IMR-90 (cell line): ENCODE measurements at regions of chr21 and their contacts with region 1.

Region 1: DNA sequence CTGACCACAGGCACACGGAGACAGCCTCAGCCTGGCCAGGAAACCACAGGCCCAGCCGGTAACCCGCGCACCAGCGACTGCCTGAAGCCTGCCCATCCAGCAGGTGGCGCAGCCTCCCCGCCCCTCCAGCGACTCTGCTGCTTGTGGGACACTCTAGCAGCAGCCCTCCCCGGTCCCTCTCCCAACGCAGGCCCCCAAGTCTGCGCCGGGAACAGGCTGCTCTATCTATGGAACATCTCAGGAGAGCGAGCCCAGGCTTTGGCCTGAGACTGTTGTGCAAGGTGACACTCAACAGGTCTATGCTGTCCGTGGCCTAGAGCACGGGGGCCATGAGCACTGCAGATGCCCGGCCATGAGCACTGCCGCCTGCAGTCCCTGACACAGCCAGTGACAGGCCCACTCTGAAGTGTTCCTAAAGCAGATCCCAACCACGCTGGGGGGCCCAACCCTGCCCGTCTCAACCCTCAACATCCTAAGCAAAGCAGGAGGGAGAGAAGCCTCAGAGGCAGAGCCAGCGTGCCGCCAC is 28.4 kb downstream of the WDR4 start:
- DNase-seq: no peak
- ATAC-seq: peak; percentile 54; the same call in 1 of the 2 replicates
- H3K4me3 ChIP-seq: no peak overlapping the region
- H3K27ac ChIP-seq: no peak overlapping the region
- H3K4me1 ChIP-seq: no peaks in the 10 kb centered on the region
- H3K27me3 ChIP-seq: no peaks in the 10 kb centered on the region
- CTCF ChIP-seq: peak; percentile 20; the same call in 1 of the 2 replicates
- POLR2A ChIP-seq: no peak
- RAD21 ChIP-seq: peak; percentile 19; the same call in 1 of the 2 replicates

Region 2: DNA sequence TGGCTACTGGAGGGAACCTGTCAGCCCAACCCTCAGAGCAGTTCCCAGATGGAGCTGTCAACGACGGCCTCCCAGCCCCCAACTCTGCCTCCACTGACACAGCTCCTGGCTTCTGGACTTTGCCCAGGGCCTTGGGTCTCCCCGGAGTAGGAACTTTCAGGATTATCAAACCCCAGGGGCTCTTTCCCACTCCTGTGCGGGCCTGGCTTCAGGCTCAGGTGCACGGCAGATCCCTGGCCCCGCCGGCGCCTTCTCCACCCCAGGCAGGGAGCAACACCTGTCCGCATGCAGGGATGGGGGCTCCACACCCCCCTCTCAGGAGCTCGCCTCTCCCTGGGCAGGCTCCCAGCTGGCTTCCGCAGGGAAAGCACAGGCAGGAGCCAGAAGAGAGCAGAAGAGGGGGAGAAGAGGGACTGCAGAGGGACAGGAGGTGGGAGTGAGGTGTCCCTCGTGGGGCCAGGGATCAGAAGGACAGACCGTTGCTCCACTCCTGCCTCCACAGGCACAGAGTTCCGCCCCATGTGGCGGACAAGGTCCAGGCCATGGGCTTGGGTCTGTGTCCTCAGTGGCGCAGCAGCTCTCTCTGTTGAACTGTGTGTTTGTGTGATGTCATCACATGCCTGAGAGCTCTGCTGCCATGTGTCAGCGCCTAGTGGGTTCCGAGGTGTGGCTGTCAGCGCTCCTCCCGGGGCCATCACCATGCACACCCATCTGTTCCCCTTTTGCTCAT is 89.8 kb before region 1 on chr21:
- CTCF ChIA-PET with region 1: no interaction called
- POLR2A ChIA-PET with region 1: no interaction called
- dilution Hi-C with region 1: no loop called
- in situ Hi-C with region 1: loop called (anchors 25 kb)
- intact Hi-C with region 1: no loop called
- DNase-seq: no peak
- ATAC-seq: no peak
- H3K4me3 ChIP-seq: no peak overlapping the region
- H3K27ac ChIP-seq: no peak overlapping the region
- H3K4me1 ChIP-seq: no peaks in the 10 kb centered on the region
- H3K27me3 ChIP-seq: 0 out of 2 replicates have a peak, but pooled peaks cover 2% of the 10 kb centered on the region
- CTCF ChIP-seq: no peak
- POLR2A ChIP-seq: no peak
- RAD21 ChIP-seq: no peak